ENCODE measurements at regions of chr11 and their contacts with region 1.

Region 1: GRCh38 chr11:65095974-65096806 is at the start of gene VPS51:
- DNase-seq: peak; percentile 65 to 93 (median 87)
- ATAC-seq: peak; percentile 88 to 90
- H3K4me3 Mint-ChIP-seq: peak within 1 kb of the TSS; percentile 77 to 96 (median 90)
- H3K27ac Mint-ChIP-seq: peak within 1 kb of the TSS; percentile 88 to 98 (median 96)
- H3K4me1 Mint-ChIP-seq: peaks cover 5 to 25% (median 13%) of the 10 kb centered on the region in 4 donors
- H3K27me3 Mint-ChIP-seq: no peaks in the 10 kb centered on the region
- polyA plus RNA-seq, gene VPS51: 70.2 to 111 (median 106) TPM

Region 2: DNA sequence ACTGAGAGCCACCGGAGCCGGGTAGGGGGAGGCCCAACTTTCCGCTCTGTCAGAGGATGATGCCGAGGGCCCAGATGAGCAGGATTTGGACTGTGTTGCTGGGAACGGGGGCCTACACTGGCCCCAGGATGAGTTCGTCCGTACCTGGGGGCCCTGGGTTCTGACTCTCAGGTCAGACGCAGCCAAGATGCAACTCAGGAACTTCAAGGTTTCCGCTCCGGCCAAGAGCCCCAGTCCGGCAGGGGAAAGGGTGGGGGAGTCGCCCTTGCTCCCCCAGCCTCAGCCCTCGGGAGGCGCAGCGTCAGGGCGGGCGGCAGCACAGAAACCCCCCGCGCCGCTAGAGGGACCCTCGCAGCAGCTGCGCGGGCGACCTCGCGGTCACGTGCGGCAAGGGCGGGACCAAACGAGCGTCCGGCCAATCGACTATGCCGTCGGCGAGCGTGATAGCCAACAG is 82.5 kb before region 1 on chr11:
- POLR2A ChIA-PET with region 1: interaction called, 12 read pairs
- DNase-seq: peak; percentile 83 to 93 (median 90)
- ATAC-seq: peak; percentile 82 to 89
- H3K4me3 Mint-ChIP-seq: peak overlapping the region; percentile 86 to 94 (median 89)
- H3K27ac Mint-ChIP-seq: peak overlapping the region; percentile 82 to 99 (median 94)
- H3K4me1 Mint-ChIP-seq: peaks cover 17 to 31% (median 29%) of the 10 kb centered on the region in 4 donors
- H3K27me3 Mint-ChIP-seq: no peaks in the 10 kb centered on the region

Region 3: GRCh38 chr11:65083834-65084597 is 12.2 kb before region 1 on chr11 and contains the starts of genes CDCA5 and ZFPL1:
- POLR2A ChIA-PET with region 1: interaction called, 48 read pairs
- DNase-seq: peak; percentile 92 to 98 (median 96)
- ATAC-seq: peak; percentile 88 to 92
- H3K4me3 Mint-ChIP-seq: peak within 1 kb of the TSS; percentile 86 to 99 (median 92)
- H3K27ac Mint-ChIP-seq: peak within 1 kb of the TSS; percentile 91 to 99 (median 98)
- H3K4me1 Mint-ChIP-seq: peaks cover 18 to 31% (median 27%) of the 10 kb centered on the region in 4 donors
- H3K27me3 Mint-ChIP-seq: peaks cover 0 to 2% (median 0%) of the 10 kb centered on the region in 5 donors
- polyA plus RNA-seq, gene CDCA5: 0.22 to 0.90 (median 0.35) TPM
- polyA plus RNA-seq, gene ZFPL1: 21.5 to 33.1 (median 24.9) TPM

Region 4: GRCh38 chr11:65134386-65135253 is 38.4 kb after region 1 on chr11 and contains the start of gene SYVN1:
- POLR2A ChIA-PET with region 1: interaction called, 14 read pairs
- DNase-seq: peak; percentile 84 to 97 (median 90)
- ATAC-seq: peak; percentile 89 to 90
- H3K4me3 Mint-ChIP-seq: peak within 1 kb of the TSS; percentile 94 to 100 (median 98)
- H3K27ac Mint-ChIP-seq: peak within 1 kb of the TSS; percentile 99 to 100 (median 100)
- H3K4me1 Mint-ChIP-seq: peaks cover 26 to 57% (median 45%) of the 10 kb centered on the region in 4 donors
- H3K27me3 Mint-ChIP-seq: no peaks in the 10 kb centered on the region
- polyA plus RNA-seq, gene SYVN1: 7.9 to 10.6 (median 8.2) TPM

Region 5: DNA sequence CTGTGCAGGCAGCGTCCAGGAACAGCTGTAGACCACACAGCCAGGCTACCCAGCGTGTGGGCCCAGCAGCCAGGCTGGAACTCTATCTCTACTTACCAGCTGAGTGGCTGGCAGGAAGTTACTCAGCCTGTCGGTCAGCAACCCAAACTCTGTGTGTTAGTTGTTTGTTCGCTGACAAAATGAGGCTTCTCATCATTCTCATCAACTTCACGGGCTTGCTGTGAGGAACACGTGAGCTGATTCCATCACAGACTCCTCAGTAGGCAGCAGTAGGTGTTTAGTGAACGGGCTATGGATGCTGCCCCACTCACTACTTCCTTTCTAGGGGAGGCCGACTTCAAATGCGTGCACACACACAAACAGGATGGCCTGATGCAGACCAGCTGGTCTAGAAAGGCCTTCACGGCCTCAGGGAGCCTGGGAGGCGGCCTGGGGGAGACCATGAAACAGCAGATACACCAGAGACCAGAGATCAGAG is 73.0 kb after region 1 on chr11:
- POLR2A ChIA-PET with region 1: no interaction called
- DNase-seq: no peak
- ATAC-seq: no peak
- H3K4me3 Mint-ChIP-seq: no peak overlapping the region
- H3K27ac Mint-ChIP-seq: peak overlapping the region in 5 of 10 donors; percentile 47 to 71 (median 63)
- H3K4me1 Mint-ChIP-seq: peaks cover 0 to 10% (median under 1%) of the 10 kb centered on the region in 4 donors
- H3K27me3 Mint-ChIP-seq: no peaks in the 10 kb centered on the region